Gastrocnemius medialis (tissue), 4 donors: ENCODE measurements at regions of chr3 and their contacts with region 1.

Region 1: DNA sequence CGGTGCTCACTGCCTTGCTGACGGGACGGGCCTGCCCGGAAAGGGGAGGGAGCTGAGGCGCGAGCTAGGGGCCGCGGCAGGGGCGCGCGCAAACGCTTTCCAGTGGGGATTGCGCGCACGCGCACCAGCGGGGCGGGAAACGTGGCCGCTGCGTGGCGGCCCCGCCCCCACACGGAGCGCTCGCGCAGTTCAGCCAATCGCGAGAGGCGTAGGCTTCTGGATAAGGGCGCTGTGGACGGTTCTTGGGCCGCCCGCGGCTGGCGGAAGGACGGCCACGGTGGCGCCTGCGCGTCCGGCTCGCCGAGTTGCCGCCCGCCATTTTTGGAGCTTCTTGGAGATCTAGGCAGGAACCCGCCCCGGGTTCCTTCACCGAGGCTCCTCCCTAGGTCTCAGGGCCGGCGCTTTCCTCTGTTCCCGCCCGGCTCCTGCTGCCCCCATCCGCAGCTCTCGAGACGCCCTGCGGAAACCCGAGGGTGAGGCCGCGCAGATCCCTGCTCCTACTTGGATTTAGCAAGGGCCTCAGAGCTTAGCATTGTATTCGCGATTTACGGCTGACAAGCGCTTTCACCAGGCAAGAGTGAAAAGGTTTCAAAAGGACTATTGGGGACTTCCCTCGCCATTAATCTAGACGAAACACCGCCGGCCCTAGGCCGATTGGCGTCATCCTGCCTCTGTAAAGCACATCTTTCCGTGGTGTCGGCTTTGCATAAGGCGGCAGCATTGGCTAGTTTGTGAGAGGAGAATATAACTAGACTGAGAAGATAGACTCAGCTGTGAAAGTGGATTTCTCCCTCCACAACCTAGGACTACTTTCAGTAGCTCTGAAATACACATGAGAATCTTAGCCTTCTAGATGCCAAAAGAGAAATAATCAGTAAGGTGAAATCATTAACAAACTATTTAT is 496 bp upstream of the STAG1 start:
- DNase-seq: peak; percentile 97
- ATAC-seq: peak; percentile 83 to 90
- H3K4me3 ChIP-seq: peak overlapping the region; percentile 71 to 94 (median 86)
- H3K27ac ChIP-seq: peak overlapping the region; percentile 84 to 99 (median 92)
- H3K4me1 ChIP-seq: peaks cover 34 to 35% of the 10 kb centered on the region in 2 donors
- H3K27me3 ChIP-seq: no peaks in the 10 kb centered on the region
- CTCF ChIP-seq: peak in 1 of 5 experiments; percentile 26
- POLR2A ChIP-seq: peak; percentile 78 to 90

Region 2: DNA sequence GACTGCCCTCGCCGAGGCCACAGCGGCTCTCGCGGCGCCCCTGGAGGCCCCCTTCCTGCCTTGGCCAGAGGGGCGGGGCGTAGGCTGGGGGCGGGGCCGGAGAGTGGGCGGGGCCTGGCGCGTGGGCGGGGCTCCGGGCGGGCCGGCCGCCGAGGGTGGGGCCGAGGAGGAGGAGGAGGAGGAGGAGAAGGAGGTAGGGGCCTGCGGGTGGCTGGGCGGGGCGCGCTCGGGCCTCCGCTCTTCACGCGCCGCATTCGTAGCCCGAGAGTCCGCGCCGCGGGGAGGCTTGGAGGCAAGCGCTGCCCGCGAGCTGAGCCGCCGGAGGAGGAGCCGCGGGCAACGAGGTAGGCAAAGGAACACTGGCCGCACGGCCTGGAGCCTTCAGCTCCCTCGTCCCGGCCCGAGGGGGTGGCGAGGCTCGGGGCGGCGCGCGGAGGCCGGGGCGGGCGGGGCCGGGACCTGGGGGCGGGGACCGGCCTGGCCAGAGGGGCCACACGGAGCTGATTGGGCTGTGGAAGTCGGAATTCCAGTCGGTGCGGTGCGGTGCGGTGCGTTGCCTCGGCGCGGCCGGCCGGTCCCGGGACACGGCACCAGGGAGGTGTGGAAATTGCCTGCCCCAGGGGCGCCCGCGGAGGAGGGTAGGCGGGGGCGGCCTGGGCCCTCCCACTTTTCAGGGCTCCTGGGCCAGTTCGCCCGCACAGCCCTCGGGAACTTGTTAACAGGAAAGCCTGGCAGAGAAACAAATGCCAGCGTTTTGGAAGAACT is 787.0 kb before region 1 on chr3 and contains the start of gene PPP2R3A:
- in situ Hi-C with region 1: no loop called
- intact Hi-C with region 1: loop called (anchors 2 kb)
- DNase-seq: peak; percentile 77 to 86
- ATAC-seq: peak; percentile 78 to 82
- H3K4me3 ChIP-seq: peak within 1 kb of the TSS; percentile 65 to 90 (median 85)
- H3K27ac ChIP-seq: peak within 1 kb of the TSS; percentile 82 to 98 (median 96)
- H3K4me1 ChIP-seq: peaks cover 39 to 51% of the 10 kb centered on the region in 2 donors
- H3K27me3 ChIP-seq: no peaks in the 10 kb centered on the region
- CTCF ChIP-seq: no peak
- POLR2A ChIP-seq: peak; percentile 79 to 80
- total RNA-seq, gene PPP2R3A: 16.8 to 30.3 (median 25.6) TPM

Region 3: GRCh38 chr3:136196401-136197158 is 556.1 kb before region 1 on chr3:
- in situ Hi-C with region 1: no loop called
- intact Hi-C with region 1: loop called (anchors 1 kb)
- DNase-seq: peak; percentile 97 to 99
- ATAC-seq: peak; percentile 78 to 84
- H3K4me3 ChIP-seq: peak overlapping the region; percentile 84 to 95 (median 92)
- H3K27ac ChIP-seq: peak overlapping the region; percentile 91 to 100 (median 100)
- H3K4me1 ChIP-seq: peaks cover 32 to 38% of the 10 kb centered on the region in 2 donors
- H3K27me3 ChIP-seq: no peaks in the 10 kb centered on the region
- CTCF ChIP-seq: no peak
- POLR2A ChIP-seq: peak; percentile 69 to 80

Region 4: GRCh38 chr3:136390574-136390973 is 362.1 kb before region 1 on chr3:
- in situ Hi-C with region 1: loop called (anchors 10 to 25 kb)
- intact Hi-C with region 1: loop called (anchors 1 kb)
- DNase-seq: no peak
- ATAC-seq: no peak
- H3K4me3 ChIP-seq: no peak overlapping the region
- H3K27ac ChIP-seq: no peak overlapping the region
- H3K4me1 ChIP-seq: no peaks in the 10 kb centered on the region
- H3K27me3 ChIP-seq: no peaks in the 10 kb centered on the region
- CTCF ChIP-seq: no peak
- POLR2A ChIP-seq: no peak

Region 5: GRCh38 chr3:136545664-136546268 is 206.9 kb before region 1 on chr3:
- in situ Hi-C with region 1: no loop called
- intact Hi-C with region 1: loop called (anchors 5 kb)
- DNase-seq: no peak
- ATAC-seq: no peak
- H3K4me3 ChIP-seq: no peak overlapping the region
- H3K27ac ChIP-seq: no peak overlapping the region
- H3K4me1 ChIP-seq: no peaks in the 10 kb centered on the region
- H3K27me3 ChIP-seq: no peaks in the 10 kb centered on the region
- CTCF ChIP-seq: no peak
- POLR2A ChIP-seq: no peak

Region 6: DNA sequence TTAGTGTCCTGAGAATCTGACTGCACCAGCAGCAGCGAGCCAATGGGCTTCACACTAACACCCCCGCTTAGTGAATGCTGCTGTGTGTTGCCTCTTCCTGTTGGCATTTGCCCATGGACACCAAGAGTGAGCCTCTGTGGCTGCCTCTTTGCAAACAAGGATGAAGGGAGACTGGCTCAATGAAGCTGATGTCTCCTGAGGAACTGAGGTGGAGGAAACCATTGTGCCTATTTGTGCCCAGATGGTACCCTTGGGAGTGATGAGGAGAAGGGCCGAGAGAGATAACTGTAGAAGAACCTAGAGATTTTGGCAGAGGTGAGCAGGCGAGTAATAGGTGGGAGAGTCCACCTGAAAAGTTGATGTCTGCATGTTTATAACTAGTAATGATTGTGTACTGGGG is 256.3 kb after region 1 on chr3:
- in situ Hi-C with region 1: loop called (anchors 5 to 10 kb)
- intact Hi-C with region 1: loop called (anchors 1 kb)
- DNase-seq: no peak
- ATAC-seq: no peak
- H3K4me3 ChIP-seq: no peak overlapping the region
- H3K27ac ChIP-seq: no peak overlapping the region
- H3K4me1 ChIP-seq: no peaks in the 10 kb centered on the region
- H3K27me3 ChIP-seq: no peaks in the 10 kb centered on the region
- CTCF ChIP-seq: no peak
- POLR2A ChIP-seq: no peak